ENCODE measurements at regions of chr22 and their contacts with region 1.

Region 1: GRCh38 chr22:40243891-40244290 is 66.2 kb downstream of the TNRC6B start:
- DNase-seq: no peak
- ATAC-seq: no peak
- H3K4me3 Mint-ChIP-seq: no peak overlapping the region
- H3K27ac Mint-ChIP-seq: peak overlapping the region; percentile 59
- H3K4me1 Mint-ChIP-seq: peaks cover 78% of the 10 kb centered on the region
- H3K27me3 Mint-ChIP-seq: no peaks in the 10 kb centered on the region

Region 2: GRCh38 chr22:39839917-39840510 is 403.9 kb before region 1 on chr22:
- CTCF ChIA-PET with region 1: no interaction called
- POLR2A ChIA-PET with region 1: no interaction called
- intact Hi-C with region 1: no loop called
- DNase-seq: peak; percentile 64
- ATAC-seq: peak; percentile 100
- H3K4me3 Mint-ChIP-seq: no peak overlapping the region
- H3K27ac Mint-ChIP-seq: no peak overlapping the region
- H3K4me1 Mint-ChIP-seq: peaks cover 16% of the 10 kb centered on the region
- H3K27me3 Mint-ChIP-seq: peaks cover 2% of the 10 kb centered on the region

Region 3: GRCh38 chr22:40193429-40194421 is 50.2 kb before region 1 on chr22:
- CTCF ChIA-PET with region 1: no interaction called
- POLR2A ChIA-PET with region 1: no interaction called
- intact Hi-C with region 1: loop called (anchors 1 to 5 kb)
- DNase-seq: no peak
- ATAC-seq: no peak
- H3K4me3 Mint-ChIP-seq: no peak overlapping the region
- H3K27ac Mint-ChIP-seq: peak overlapping the region; percentile 72
- H3K4me1 Mint-ChIP-seq: peaks cover 86% of the 10 kb centered on the region
- H3K27me3 Mint-ChIP-seq: no peaks in the 10 kb centered on the region

Region 4: GRCh38 chr22:40203572-40203971 is 40.3 kb before region 1 on chr22:
- CTCF ChIA-PET with region 1: interaction called, 4 read pairs
- POLR2A ChIA-PET with region 1: no interaction called
- intact Hi-C with region 1: loop called (anchors 2 kb)
- DNase-seq: peak; percentile 55
- ATAC-seq: peak; percentile 88
- H3K4me3 Mint-ChIP-seq: peak overlapping the region; percentile 63
- H3K27ac Mint-ChIP-seq: peak overlapping the region; percentile 94
- H3K4me1 Mint-ChIP-seq: peaks cover 66% of the 10 kb centered on the region
- H3K27me3 Mint-ChIP-seq: no peaks in the 10 kb centered on the region

Region 5: GRCh38 chr22:40340044-40340443 is 96.2 kb after region 1 on chr22:
- CTCF ChIA-PET with region 1: no interaction called
- POLR2A ChIA-PET with region 1: no interaction called
- intact Hi-C with region 1: no loop called
- DNase-seq: no peak
- ATAC-seq: no peak
- H3K4me3 Mint-ChIP-seq: no peak overlapping the region
- H3K27ac Mint-ChIP-seq: no peak overlapping the region
- H3K4me1 Mint-ChIP-seq: peaks cover 46% of the 10 kb centered on the region
- H3K27me3 Mint-ChIP-seq: no peaks in the 10 kb centered on the region

Measured in activated CD4-positive, alpha-beta T cell treated with anti-CD3 and anti-CD28 coated beads for 36 hours (primary cell).